Endothelial cell of umbilical vein (primary cell): ENCODE measurements at regions of chr7 and their contacts with region 1.

Region 1: GRCh38 chr7:122092964-122093797 is 50.9 kb downstream of the AASS start:
- DNase-seq: peak; percentile 82
- H3K4me3 ChIP-seq: no peak overlapping the region
- H3K27ac ChIP-seq: no peak overlapping the region
- H3K4me1 ChIP-seq: no peaks in the 10 kb centered on the region
- H3K27me3 ChIP-seq: no peaks in the 10 kb centered on the region
- CTCF ChIP-seq: peak; percentile 75 to 84
- POLR2A ChIP-seq: no peak

Region 2: DNA sequence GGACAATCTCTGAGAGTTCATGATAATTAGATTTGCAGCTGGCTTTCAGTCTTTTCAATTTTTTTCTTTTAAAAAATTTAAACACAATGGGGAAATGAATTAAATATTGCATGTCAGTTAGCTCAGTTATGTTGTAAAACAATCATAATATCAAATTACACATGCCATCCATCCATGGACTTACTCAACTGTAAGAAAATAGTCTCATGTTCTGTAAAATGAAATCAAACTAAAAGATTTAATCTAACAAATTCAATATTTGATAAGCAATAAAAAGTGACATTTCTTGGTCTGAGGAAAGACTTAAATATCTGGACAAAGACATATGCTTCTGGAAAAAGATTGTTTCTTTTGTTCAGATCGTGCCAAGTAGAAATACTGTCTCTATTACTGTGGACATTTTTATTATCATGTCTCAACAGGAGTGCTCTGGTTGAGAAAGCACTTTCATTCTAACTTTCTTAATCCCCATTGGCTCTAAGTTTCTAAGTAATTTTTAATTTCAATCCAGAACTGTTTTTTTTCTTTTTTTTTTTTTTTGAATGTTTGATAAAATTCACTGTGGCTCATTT is 517.9 kb before region 1 on chr7:
- CTCF ChIA-PET with region 1: no interaction called
- POLR2A ChIA-PET with region 1: no interaction called
- dilution Hi-C with region 1: no loop called
- intact Hi-C with region 1: no loop called
- DNase-seq: no peak
- H3K4me3 ChIP-seq: no peak overlapping the region
- H3K27ac ChIP-seq: no peak overlapping the region
- H3K4me1 ChIP-seq: no peaks in the 10 kb centered on the region
- H3K27me3 ChIP-seq: peaks cover 5 to 6% of the 10 kb centered on the region in 2 experiments
- CTCF ChIP-seq: no peak
- POLR2A ChIP-seq: no peak

Region 3: DNA sequence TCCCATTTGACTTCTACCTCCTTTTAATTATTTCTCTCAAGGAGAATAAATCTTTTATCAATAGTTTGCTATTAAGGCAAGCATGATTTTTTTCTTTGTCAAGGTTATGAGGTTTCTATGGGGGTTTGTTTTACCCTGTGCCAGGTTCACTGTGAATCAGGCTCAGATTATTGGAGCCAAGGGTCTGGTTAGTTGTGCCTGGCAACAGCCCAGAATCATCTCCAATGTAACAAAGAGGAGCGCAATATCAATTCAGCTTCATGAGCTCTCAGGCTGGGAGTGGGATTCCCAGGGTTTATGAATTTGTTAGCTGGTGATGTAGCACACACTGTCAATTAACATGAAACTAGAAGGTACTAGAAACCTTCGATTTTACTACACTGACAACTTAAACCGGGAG is 22.3 kb before region 1 on chr7:
- CTCF ChIA-PET with region 1: interaction called, 15 read pairs
- POLR2A ChIA-PET with region 1: no interaction called
- dilution Hi-C with region 1: no loop called
- intact Hi-C with region 1: no loop called
- DNase-seq: no peak
- H3K4me3 ChIP-seq: no peak overlapping the region
- H3K27ac ChIP-seq: no peak overlapping the region
- H3K4me1 ChIP-seq: no peaks in the 10 kb centered on the region
- H3K27me3 ChIP-seq: no peaks in the 10 kb centered on the region
- CTCF ChIP-seq: no peak
- POLR2A ChIP-seq: no peak

Region 4: GRCh38 chr7:122123746-122124145 is 30.6 kb after region 1 on chr7:
- CTCF ChIA-PET with region 1: interaction called, 15 read pairs
- POLR2A ChIA-PET with region 1: no interaction called
- dilution Hi-C with region 1: no loop called
- intact Hi-C with region 1: no loop called
- DNase-seq: no peak
- H3K4me3 ChIP-seq: no peak overlapping the region
- H3K27ac ChIP-seq: no peak overlapping the region
- H3K4me1 ChIP-seq: no peaks in the 10 kb centered on the region
- H3K27me3 ChIP-seq: no peaks in the 10 kb centered on the region
- CTCF ChIP-seq: no peak
- POLR2A ChIP-seq: no peak

Region 5: GRCh38 chr7:122143751-122144711 is 50.9 kb after region 1 on chr7 and contains the start of gene AASS:
- CTCF ChIA-PET with region 1: interaction called, 17 read pairs
- POLR2A ChIA-PET with region 1: no interaction called
- dilution Hi-C with region 1: no loop called
- intact Hi-C with region 1: no loop called
- DNase-seq: peak; percentile 96
- H3K4me3 ChIP-seq: peak within 1 kb of the TSS; percentile 68 to 92 (median 81)
- H3K27ac ChIP-seq: peak within 1 kb of the TSS; percentile 58
- H3K4me1 ChIP-seq: peaks cover 16% of the 10 kb centered on the region
- H3K27me3 ChIP-seq: no peaks in the 10 kb centered on the region
- CTCF ChIP-seq: no peak
- POLR2A ChIP-seq: peak; percentile 71
- total RNA-seq, gene AASS: 27.8 and 30.1 TPM in 2 replicates

Region 6: DNA sequence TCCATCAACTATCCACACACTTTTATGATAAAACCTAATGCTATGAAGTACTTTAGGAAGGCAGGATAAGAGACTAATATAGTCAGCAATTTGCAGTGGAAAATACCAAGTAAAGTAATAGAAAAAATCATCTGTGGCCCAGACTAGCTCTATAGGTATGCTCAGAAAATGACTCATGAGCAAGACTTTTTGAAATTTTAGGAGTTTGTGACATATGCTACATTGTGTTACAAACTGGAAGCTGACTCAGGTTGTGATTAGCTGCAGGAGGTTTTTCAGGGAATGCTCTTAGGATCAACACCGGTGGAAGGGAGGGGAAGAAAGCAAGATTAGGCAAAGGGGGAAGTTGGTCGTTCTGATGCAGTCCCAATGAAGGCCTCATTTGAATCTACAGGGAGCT is 155.3 kb after region 1 on chr7:
- CTCF ChIA-PET with region 1: no interaction called
- POLR2A ChIA-PET with region 1: no interaction called
- dilution Hi-C with region 1: no loop called
- intact Hi-C with region 1: no loop called
- DNase-seq: no peak
- H3K4me3 ChIP-seq: no peak overlapping the region
- H3K27ac ChIP-seq: no peak overlapping the region
- H3K4me1 ChIP-seq: no peaks in the 10 kb centered on the region
- H3K27me3 ChIP-seq: peaks cover under 1 to 3% of the 10 kb centered on the region in 2 experiments
- CTCF ChIP-seq: no peak
- POLR2A ChIP-seq: no peak

Region 7: DNA sequence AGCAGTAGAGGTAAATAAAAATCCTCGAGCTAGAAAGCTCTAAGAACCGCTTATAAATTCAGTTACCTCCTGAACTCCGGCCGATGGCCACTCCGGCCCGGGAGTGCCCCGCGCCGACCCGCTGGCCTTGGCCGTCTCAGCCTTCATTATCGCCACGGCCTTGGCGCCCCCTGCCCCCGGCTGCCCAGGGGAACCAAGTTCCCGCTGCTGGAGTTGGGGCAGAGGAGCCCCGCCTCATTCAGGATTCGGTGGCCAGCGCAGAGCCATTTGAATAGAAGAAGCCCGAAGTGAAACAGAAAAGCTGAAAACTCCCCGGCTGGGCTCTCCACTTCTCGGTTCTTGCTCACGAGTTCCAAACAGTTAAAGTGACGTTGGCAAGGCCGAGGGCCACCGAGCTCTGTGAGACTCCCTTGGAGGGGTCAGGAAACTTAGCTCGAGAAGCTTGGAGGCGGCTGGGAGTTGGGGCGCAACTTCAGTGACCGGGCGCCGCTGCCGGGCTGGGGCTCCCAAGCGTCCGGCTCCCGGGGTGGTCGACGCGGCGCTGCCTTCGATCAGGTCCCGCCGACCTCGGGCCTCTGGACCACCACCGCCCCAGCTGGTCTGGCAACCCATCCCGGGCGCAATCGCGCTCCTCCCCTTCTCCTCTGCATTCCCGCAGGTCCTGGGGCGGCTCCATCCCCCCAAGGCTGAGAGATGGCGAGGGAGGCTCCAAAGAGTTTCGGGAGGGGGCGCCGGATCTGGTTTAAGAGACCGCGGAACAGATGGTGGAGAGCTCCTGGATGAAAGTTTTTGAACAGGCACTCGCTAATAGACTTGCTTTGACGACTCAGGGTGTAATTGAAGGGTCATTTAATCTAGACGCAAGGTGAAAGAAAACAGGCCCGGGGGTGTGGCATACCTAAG is 217.2 kb after region 1 on chr7:
- CTCF ChIA-PET with region 1: interaction called, 3 read pairs
- POLR2A ChIA-PET with region 1: no interaction called
- dilution Hi-C with region 1: no loop called
- intact Hi-C with region 1: loop called (anchors 1 kb)
- DNase-seq: peak; percentile 38
- H3K4me3 ChIP-seq: peak overlapping the region; percentile 13 to 33 (median 23)
- H3K27ac ChIP-seq: no peak overlapping the region
- H3K4me1 ChIP-seq: peaks cover 14% of the 10 kb centered on the region
- H3K27me3 ChIP-seq: peaks cover 85 to 100% of the 10 kb centered on the region in 2 experiments
- CTCF ChIP-seq: no peak
- POLR2A ChIP-seq: no peak